Left cardiac atrium (tissue), 4 donors: ENCODE measurements at regions of chr11 and their contacts with region 1.

Region 1: DNA sequence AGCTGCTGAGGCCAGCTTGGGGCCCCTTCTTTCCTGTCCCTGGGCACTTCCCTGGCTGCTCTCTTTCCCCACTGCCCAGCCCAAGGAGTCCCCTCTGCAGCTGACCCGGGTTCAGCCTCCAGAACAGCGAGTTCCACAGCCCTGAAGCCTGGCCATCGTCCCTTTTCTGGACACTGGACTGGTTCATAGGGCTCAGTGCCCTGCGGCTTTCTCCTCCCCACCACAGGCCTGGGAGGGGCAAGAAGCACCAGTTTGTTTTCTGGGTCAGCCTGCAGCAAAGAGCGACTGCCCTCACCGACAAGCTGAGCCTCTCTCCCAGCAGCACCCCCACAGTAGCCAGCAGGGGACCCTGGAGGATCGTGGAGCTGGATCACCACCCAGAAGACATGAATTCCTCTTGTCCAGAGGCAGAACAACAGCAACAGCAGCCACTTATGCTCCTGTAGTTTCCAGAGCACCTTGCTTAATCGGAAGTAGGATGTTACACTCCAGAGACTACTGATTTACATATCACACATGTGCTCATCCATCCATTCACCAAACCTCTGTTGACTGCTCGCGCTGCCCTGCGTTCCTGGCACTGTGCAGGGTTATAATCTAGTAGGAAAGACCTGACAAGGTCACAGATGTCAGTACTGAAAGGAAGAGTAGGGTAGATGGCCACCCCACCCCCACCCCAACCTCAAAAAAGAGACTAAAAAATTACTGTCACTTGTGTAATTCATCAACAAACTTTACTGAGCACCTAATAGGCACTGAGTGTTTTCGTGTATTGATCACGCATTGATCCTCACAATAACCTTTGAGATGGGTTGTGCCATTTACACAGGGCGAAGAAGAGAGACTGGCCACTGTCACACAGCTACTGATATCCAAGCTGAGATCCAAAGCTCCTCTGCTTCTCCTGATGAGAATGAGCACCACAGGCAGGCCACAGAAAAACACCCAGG is 13.0 kb upstream of the CXCR5 start:
- DNase-seq: peak; percentile 69
- ATAC-seq: peak; percentile 81 to 85

Region 2: DNA sequence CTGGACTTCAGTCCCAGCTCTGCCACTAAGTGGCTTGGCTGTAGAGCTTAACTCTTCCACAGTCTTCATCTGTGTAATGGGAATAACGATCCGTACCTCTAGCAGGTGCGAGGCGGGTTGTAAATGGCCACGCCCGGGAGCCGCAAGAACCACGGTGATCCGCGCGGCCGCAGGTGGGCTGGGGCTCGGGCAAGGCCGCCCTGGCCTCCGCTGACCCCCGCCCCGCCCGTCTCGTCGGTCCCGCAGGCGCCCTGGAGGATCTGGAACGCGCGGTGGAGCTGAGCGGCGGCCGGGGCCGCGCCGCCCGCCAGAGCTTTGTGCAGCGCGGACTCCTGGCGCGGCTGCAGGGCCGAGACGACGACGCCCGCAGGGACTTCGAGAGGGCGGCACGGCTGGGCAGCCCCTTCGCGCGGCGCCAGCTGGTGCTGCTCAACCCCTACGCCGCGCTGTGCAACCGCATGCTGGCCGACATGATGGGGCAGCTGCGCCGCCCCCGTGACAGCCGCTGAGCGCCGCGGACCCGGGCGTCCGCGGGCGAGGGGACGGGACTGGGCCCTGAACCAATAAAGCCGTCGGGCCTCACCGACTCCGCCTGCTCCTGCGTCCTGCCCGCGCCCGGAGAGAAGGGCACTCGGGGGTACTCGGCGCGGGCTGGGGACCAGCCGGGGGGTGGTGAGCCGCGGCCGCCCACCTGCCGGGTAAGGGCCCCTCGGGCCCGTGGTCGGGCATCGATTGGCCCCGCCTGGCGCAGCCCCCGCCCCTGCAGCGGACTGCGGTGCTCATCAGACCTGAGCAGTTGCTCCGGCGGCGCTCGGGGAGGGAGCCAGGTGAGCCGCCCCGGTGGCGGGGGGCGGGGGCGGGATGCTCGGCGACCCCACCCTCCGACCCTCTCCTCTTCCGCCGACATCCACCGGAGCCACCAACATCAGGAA is 340.0 kb before region 1 on chr11 and contains the start of gene TMEM25:
- intact Hi-C with region 1: no loop called
- DNase-seq: peak; percentile 76
- ATAC-seq: peak; percentile 83 to 89
- total RNA-seq, gene TMEM25: 8.8 to 10.1 TPM

Region 3: GRCh38 chr11:118791111-118791965 is 79.3 kb before region 1 on chr11 and contains the start of gene DDX6:
- intact Hi-C with region 1: loop called in 1 of 2 experiments (anchors 5 kb)
- DNase-seq: peak; percentile 94
- ATAC-seq: peak; percentile 87 to 88
- total RNA-seq, gene DDX6: 109 to 115 TPM

Region 4: GRCh38 chr11:118928108-118928870 is 57.6 kb after region 1 on chr11:
- intact Hi-C with region 1: no loop called
- DNase-seq: peak; percentile 90
- ATAC-seq: peak; percentile 75 to 78